ENCODE measurements at regions of chr6 and their contacts with region 1.

Region 1: GRCh38 chr6:31493875-31494694 is 3.9 kb upstream of the MICB start:
- DNase-seq: peak; percentile 86
- H3K4me3 ChIP-seq: peak overlapping the region; percentile 44 to 84 (median 58)
- H3K27ac ChIP-seq: peak overlapping the region; percentile 74
- H3K4me1 ChIP-seq: peaks cover 20% of the 10 kb centered on the region
- H3K27me3 ChIP-seq: no peaks in the 10 kb centered on the region
- CTCF ChIP-seq: peak; percentile 84 to 95
- POLR2A ChIP-seq: no peak

Region 2: GRCh38 chr6:31462964-31463870 is 30.9 kb before region 1 on chr6:
- CTCF ChIA-PET with region 1: no interaction called
- POLR2A ChIA-PET with region 1: no interaction called
- dilution Hi-C with region 1: no loop called
- intact Hi-C with region 1: no loop called
- DNase-seq: peak; percentile 86
- H3K4me3 ChIP-seq: no peak overlapping the region
- H3K27ac ChIP-seq: no peak overlapping the region
- H3K4me1 ChIP-seq: no peaks in the 10 kb centered on the region
- H3K27me3 ChIP-seq: peaks cover 10 to 11% of the 10 kb centered on the region in 2 experiments
- CTCF ChIP-seq: no peak
- POLR2A ChIP-seq: no peak

Region 3: DNA sequence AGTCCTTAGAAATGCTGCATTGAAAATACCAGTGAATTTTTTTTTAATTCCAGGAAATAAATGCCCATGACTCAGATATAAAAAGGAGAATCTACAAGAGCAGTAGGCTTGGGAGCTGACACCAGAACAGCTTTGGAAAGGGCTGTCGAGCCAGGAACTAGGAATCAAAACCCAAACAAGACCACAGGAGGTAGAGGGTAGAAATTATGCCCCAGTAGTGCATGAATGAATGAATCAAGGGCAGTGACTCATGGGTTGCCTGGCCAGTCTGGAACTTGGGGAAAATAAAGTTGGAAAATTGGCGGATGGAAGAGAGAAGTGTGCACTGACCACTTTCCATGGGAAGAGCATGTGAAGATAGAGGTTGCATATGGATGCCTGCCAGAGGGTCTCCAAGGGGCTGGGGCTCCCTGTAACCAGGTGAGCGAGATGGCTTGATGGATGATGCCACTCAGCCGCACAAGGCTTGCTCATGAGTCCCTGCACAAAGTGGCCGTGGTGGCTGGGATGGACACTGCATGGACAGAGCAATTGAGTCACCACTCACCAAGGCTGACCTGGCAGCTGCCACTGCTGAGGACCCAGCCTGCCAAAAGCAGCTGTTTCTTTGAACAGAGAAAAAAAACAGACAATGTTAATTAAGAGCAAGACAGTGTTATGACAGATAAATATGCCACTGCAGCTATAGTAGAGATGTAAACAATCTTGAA is 19.5 kb after region 1 on chr6:
- CTCF ChIA-PET with region 1: interaction called, 13 read pairs
- POLR2A ChIA-PET with region 1: no interaction called
- dilution Hi-C with region 1: no loop called
- intact Hi-C with region 1: no loop called
- DNase-seq: no peak
- H3K4me3 ChIP-seq: no peak overlapping the region
- H3K27ac ChIP-seq: no peak overlapping the region
- H3K4me1 ChIP-seq: peaks cover 3% of the 10 kb centered on the region
- H3K27me3 ChIP-seq: no peaks in the 10 kb centered on the region
- CTCF ChIP-seq: no peak
- POLR2A ChIP-seq: no peak

Region 4: DNA sequence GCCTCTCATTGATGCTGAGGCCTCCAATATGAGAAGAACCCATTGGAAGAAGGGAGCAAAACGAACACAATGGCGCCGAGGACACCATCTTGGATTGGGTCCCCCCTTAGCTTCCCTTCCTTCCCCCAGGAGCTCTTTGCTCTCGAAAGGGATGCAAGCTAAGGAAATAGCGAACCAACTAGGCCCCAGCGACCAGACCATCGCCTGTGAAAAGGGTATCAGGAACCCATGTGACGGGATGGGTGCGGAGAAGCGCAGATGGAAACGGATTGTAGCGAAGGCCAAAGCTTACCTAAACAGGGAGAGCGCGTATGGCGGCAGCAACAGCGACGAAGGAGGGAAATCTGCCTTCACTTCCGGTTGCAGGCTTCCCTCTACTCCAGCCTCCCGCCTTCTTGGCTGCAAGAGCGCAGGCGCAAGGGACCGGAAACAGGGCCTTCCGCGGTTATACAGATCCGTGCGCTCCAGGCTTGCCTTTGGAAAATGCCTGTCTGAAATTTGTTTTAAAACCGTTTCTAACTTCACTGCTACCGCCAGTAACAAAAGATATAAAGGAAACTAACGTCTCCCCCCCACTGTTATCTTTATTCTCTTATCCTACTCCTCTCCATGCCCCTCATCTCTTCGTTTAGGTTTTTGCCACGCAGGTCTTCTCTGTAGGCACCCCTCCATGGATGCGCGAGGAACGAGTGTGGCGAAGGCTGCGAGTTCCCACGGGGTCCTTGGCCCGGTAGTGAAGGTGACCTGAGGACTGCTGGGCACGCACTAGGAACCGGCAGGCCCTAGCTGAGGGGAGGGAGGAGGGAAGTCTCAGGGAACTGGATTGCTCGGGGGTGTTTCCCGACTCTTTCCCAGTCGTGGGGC is 47.8 kb after region 1 on chr6 and contains the start of gene DDX39B:
- CTCF ChIA-PET with region 1: interaction called, 21 read pairs
- POLR2A ChIA-PET with region 1: interaction called, 6 read pairs
- dilution Hi-C with region 1: no loop called
- intact Hi-C with region 1: loop called (anchors 1 kb)
- DNase-seq: peak; percentile 97
- H3K4me3 ChIP-seq: peak within 1 kb of the TSS; percentile 59 to 95 (median 80)
- H3K27ac ChIP-seq: peak within 1 kb of the TSS; percentile 85
- H3K4me1 ChIP-seq: peaks cover 28% of the 10 kb centered on the region
- H3K27me3 ChIP-seq: no peaks in the 10 kb centered on the region
- CTCF ChIP-seq: no peak
- POLR2A ChIP-seq: peak; percentile 96
- total RNA-seq, gene DDX39B: 453 and 481 TPM in 2 replicates

Region 5: DNA sequence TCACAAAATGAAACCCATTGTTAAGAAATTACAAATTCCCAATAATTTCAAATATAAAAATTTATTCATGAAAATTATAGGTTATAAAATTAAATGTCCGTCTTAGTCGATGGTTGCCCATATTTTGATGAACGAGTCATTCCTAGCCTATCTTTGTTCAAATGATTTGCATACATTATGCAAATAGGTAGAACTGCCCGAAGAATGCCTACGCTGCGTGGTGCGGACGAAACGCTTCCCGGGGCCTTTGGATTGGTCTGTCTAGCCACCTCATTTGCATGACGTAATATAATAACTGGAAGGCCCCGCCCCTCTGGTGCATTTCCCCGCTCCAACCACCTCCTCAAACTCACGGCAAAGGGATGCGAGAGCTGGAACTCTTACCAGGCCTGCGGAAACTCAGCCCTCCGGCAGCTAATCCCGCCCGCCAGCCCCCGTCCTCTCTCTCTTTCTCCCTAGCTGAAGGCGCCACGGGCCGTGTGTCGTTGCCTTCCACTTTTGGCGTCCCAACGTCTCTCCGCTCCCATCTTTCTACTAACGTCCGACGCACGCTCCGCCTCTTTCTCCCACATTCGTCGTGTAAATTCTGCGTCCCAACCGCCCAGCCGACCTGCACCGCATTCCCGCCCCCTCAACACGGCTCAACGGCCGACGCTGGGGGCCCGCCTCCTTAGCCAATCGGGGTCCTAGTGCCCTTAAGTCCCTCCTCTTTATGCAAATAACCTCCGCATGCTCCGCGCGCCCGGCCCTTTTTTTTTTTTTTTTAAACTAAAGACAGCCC is 125.9 kb after region 1 on chr6:
- CTCF ChIA-PET with region 1: no interaction called
- POLR2A ChIA-PET with region 1: no interaction called
- dilution Hi-C with region 1: no loop called
- intact Hi-C with region 1: loop called (anchors 5 kb)
- DNase-seq: peak; percentile 100
- H3K4me3 ChIP-seq: peak overlapping the region in 2 of 3 experiments; percentile 57 to 80
- H3K27ac ChIP-seq: peak overlapping the region; percentile 95
- H3K4me1 ChIP-seq: peaks cover 13% of the 10 kb centered on the region
- H3K27me3 ChIP-seq: no peaks in the 10 kb centered on the region
- CTCF ChIP-seq: no peak
- POLR2A ChIP-seq: peak; percentile 73

Region 6: DNA sequence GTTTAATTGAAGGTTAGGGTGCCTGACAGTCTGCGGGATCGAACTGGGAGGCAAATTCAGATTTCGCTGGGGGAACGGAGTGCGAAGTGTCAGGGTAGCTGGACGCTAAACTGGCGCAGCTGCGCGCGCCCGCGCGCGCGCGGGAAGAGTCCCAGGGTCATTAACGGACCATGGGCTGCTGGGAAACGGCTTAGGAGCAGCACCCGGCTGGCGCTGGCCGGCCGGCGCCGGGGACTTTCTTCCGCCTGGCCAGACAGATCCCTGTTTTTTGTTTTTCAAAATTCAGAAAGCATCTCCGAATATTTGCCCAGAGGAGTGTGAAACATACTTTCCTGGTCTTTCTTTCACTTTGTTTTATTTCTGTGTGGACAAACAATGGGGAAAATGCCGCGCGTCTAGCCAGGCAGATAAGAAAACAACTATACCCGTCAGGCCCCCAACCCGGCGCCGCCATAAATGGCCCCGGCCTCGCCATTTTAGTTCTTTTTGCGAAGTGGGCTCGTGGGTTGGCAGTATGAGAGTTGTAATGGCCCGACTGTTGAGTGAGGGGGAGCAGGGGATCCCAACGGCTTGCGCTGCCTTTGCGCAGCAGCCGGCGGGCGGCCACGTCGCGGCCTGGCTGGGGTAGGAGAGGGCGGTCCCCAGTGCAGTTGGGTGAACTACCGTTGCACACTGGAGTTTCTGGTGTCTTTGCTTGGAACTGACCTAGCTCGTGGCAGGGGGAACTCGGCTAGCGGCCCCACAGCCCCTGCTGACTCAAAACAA is 340.5 kb after region 1 on chr6:
- CTCF ChIA-PET with region 1: no interaction called
- POLR2A ChIA-PET with region 1: interaction called, 3 read pairs
- dilution Hi-C with region 1: no loop called
- intact Hi-C with region 1: loop called (anchors 5 kb)
- DNase-seq: peak; percentile 83
- H3K4me3 ChIP-seq: peak overlapping the region; percentile 38 to 98 (median 81)
- H3K27ac ChIP-seq: peak overlapping the region; percentile 97
- H3K4me1 ChIP-seq: peaks cover 32% of the 10 kb centered on the region
- H3K27me3 ChIP-seq: no peaks in the 10 kb centered on the region
- CTCF ChIP-seq: no peak
- POLR2A ChIP-seq: peak; percentile 100

Region 7: DNA sequence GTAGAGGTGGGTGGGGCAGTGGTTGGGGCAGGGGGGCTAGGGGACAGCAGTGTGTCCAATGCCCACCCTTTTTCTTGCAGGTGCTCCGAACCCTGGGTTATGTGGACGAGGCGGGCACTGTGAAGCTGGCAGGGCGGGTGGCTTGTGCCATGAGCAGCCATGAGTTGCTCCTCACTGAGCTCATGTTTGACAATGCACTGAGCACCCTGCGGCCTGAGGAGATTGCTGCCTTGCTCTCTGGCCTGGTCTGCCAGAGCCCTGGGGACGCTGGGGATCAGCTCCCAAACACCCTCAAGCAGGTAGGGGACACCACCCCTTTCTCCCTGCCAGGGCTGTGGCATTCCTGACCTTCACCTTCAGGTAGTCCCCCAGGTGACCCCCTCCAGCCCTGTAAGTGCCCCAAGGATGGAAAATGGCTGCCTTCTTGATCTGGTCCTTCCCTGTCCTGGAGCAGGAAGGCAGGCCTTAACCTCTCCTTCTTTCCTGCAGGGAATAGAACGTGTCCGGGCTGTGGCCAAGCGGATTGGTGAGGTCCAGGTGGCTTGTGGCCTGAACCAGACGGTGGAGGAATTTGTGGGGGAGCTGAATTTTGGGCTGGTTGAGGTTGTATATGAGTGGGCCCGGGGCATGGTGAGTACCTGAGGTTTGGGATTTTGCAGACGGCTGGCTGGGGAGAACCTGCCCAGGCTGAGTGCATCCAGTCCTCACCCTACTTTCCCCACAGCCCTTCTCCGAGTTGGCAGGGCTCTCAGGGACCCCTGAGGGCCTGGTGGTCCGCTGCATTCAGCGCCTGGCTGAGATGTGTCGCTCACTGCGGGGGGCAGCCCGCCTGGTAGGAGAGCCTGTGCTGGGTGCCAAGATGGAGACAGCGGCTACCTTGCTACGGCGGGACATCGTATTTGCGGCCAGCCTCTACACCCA is 475.0 kb after region 1 on chr6:
- CTCF ChIA-PET with region 1: no interaction called
- POLR2A ChIA-PET with region 1: no interaction called
- dilution Hi-C with region 1: no loop called
- intact Hi-C with region 1: no loop called
- DNase-seq: no peak
- H3K4me3 ChIP-seq: no peak overlapping the region
- H3K27ac ChIP-seq: no peak overlapping the region
- H3K4me1 ChIP-seq: peaks cover 17% of the 10 kb centered on the region
- H3K27me3 ChIP-seq: no peaks in the 10 kb centered on the region
- CTCF ChIP-seq: no peak
- POLR2A ChIP-seq: no peak